Pancreas (tissue), 10 donors: ENCODE measurements at regions of chr1 and their contacts with region 1.

Region 1: DNA sequence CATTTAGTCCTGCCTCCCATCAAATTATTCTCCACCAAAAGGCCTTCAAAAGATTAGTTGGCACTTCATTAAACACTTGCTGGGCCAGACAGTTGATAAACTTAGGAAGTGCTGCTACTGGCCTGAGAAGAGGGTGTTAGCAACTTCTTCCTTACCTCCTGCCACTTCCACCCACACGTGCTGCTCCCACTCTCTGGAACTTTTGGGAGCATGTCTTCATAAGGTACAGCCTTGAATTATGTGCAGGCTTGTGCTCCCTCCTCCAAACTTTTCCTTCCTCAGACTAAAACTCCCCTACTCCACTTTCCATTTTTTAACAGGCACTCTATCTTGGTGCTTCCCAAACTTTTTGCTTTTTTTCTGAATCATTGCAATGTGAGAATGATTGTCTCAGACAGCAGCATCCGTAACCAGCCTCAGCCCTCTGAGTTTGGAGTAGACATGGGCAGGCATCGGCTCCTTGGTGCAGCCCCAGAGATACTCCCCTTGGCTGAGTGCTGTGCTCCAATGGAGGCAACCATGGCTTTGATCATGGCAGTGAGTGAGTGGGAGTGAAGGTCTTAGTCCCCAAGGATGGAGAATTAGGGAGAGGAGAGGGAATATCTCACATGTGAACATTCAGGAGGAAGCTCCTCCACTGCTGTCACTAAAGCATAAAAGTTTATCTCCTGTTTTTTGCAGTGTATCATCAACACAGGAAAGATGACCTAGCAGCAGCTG is 8.7 kb upstream of the LELP1 start:
- DNase-seq: no peak
- ATAC-seq: no peak
- H3K4me3 ChIP-seq: no peak overlapping the region
- H3K27ac ChIP-seq: no peak overlapping the region
- H3K4me1 ChIP-seq: no peaks in the 10 kb centered on the region
- H3K27me3 ChIP-seq: no peaks in the 10 kb centered on the region
- CTCF ChIP-seq: no peak

Region 2: GRCh38 chr1:152912900-152913299 is 281.6 kb before region 1 on chr1:
- intact Hi-C with region 1: loop called in 1 of 3 experiments (anchors 5 kb)
- DNase-seq: no peak
- ATAC-seq: no peak
- H3K4me3 ChIP-seq: no peak overlapping the region
- H3K27ac ChIP-seq: no peak overlapping the region
- H3K4me1 ChIP-seq: no peaks in the 10 kb centered on the region
- H3K27me3 ChIP-seq: peaks cover 0 to 7% (median 0%) of the 10 kb centered on the region in 4 donors
- CTCF ChIP-seq: no peak

Region 3: GRCh38 chr1:153040950-153041631 is 153.4 kb before region 1 on chr1 and contains the start of gene SPRR2D:
- intact Hi-C with region 1: no loop called
- DNase-seq: no peak
- ATAC-seq: no peak
- H3K4me3 ChIP-seq: no peak within 1 kb of the TSS
- H3K27ac ChIP-seq: no peak within 1 kb of the TSS
- H3K4me1 ChIP-seq: no peaks in the 10 kb centered on the region
- H3K27me3 ChIP-seq: peaks cover 0 to 3% (median 0%) of the 10 kb centered on the region in 4 donors
- CTCF ChIP-seq: no peak
- total RNA-seq, gene SPRR2D: not detected